ENCODE measurements at regions of chr15 and their contacts with region 1.

Region 1: GRCh38 chr15:66851226-66852071 is 149.4 kb downstream of the SMAD6 start:
- DNase-seq: peak; percentile 85
- H3K4me3 Mint-ChIP-seq: no peak overlapping the region
- H3K27ac Mint-ChIP-seq: no peak overlapping the region
- H3K4me1 Mint-ChIP-seq: peaks cover 9% of the 10 kb centered on the region
- H3K27me3 Mint-ChIP-seq: peaks cover 10% of the 10 kb centered on the region

Region 2: DNA sequence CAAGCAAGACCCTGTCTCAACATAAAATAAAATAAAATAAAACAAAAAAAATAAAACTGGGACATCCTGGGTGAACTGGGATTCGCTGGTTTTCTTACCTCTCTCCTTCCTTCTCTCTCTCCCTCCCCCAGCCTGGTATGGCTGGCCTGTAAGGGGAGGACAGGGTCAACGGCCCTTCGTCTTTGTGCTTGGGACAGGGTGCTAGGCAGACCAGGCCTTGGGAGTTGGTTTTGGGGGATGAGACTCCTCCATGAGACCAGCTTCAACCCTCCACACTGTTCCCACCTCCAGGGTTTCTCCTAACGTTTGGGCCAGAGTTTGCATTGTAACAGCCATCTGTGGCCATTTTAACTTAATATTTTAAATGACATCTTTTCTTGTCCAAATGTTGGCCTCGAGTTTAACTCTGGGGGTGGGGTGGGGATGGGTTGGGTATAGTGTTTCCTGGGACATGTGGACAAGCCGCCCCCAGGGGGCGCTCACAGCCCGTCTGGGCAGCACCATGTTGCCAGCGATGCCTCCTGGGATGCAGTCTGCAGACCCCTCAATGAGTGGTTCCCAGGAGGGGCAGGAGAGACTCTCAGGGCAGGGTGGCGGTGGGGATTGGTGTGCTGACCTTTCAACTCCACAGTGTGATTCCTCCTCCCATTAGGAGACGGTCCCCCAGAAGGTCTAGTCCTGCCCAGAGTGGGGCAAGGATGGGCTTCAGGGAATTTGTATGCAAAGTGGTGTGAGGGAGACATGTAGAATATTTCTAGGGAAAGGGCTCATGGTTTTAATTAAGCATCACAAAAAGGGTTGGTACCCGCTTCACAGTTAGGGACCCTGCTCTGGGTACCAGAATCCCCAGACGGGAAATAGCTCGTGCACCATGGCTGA is 247.9 kb before region 1 on chr15:
- CTCF ChIA-PET with region 1: interaction called, 95 read pairs
- POLR2A ChIA-PET with region 1: no interaction called
- intact Hi-C with region 1: loop called (anchors 1 kb)
- DNase-seq: peak; percentile 71
- H3K4me3 Mint-ChIP-seq: no peak overlapping the region
- H3K27ac Mint-ChIP-seq: no peak overlapping the region
- H3K4me1 Mint-ChIP-seq: no peaks in the 10 kb centered on the region
- H3K27me3 Mint-ChIP-seq: peaks cover 5% of the 10 kb centered on the region

Region 3: GRCh38 chr15:66638377-66638776 is 213.1 kb before region 1 on chr15:
- CTCF ChIA-PET with region 1: interaction called, 10 read pairs
- POLR2A ChIA-PET with region 1: no interaction called
- intact Hi-C with region 1: no loop called
- DNase-seq: peak; percentile 42
- H3K4me3 Mint-ChIP-seq: no peak overlapping the region
- H3K27ac Mint-ChIP-seq: no peak overlapping the region
- H3K4me1 Mint-ChIP-seq: peaks cover 10% of the 10 kb centered on the region
- H3K27me3 Mint-ChIP-seq: no peaks in the 10 kb centered on the region

Region 4: DNA sequence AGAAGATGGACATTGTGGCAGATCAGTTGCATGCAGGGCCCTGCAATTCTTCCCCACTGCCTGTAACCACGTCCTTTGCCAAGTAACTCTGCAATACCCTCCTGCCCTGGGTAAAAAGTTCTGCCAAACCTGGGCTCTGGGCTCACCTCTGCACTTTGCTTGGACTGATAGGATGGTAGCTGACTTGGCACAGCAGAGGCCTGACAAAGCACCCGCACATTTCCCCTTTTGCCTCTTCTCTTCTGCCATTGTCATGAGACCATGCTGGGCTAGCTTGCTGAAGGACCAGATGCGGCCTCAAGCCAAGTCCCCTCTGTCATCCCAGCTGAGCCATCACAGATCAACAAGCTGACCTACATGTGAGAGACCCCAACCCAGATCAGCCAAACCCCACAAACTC is 27.0 kb before region 1 on chr15:
- CTCF ChIA-PET with region 1: interaction called, 18 read pairs
- POLR2A ChIA-PET with region 1: no interaction called
- intact Hi-C with region 1: no loop called
- DNase-seq: no peak
- H3K4me3 Mint-ChIP-seq: no peak overlapping the region
- H3K27ac Mint-ChIP-seq: no peak overlapping the region
- H3K4me1 Mint-ChIP-seq: no peaks in the 10 kb centered on the region
- H3K27me3 Mint-ChIP-seq: peaks cover 2% of the 10 kb centered on the region

Region 5: GRCh38 chr15:66862878-66863335 is 11.5 kb after region 1 on chr15:
- CTCF ChIA-PET with region 1: interaction called, 68 read pairs
- POLR2A ChIA-PET with region 1: no interaction called
- intact Hi-C with region 1: no loop called
- DNase-seq: peak; percentile 86
- H3K4me3 Mint-ChIP-seq: no peak overlapping the region
- H3K27ac Mint-ChIP-seq: no peak overlapping the region
- H3K4me1 Mint-ChIP-seq: no peaks in the 10 kb centered on the region
- H3K27me3 Mint-ChIP-seq: peaks cover 21% of the 10 kb centered on the region

Region 6: GRCh38 chr15:67134067-67134838 is 282.8 kb after region 1 on chr15:
- CTCF ChIA-PET with region 1: no interaction called
- POLR2A ChIA-PET with region 1: no interaction called
- intact Hi-C with region 1: no loop called
- DNase-seq: peak; percentile 79
- H3K4me3 Mint-ChIP-seq: peak overlapping the region; percentile 82
- H3K27ac Mint-ChIP-seq: peak overlapping the region; percentile 95
- H3K4me1 Mint-ChIP-seq: peaks cover 92% of the 10 kb centered on the region
- H3K27me3 Mint-ChIP-seq: no peaks in the 10 kb centered on the region

Measured in activated CD4-positive, alpha-beta memory T cell treated with anti-CD3 and anti-CD28 coated beads for 36 hours (primary cell).